Psoas muscle (tissue), 8 donors: ENCODE measurements at regions of chr4 and their contacts with region 1.

Region 1: DNA sequence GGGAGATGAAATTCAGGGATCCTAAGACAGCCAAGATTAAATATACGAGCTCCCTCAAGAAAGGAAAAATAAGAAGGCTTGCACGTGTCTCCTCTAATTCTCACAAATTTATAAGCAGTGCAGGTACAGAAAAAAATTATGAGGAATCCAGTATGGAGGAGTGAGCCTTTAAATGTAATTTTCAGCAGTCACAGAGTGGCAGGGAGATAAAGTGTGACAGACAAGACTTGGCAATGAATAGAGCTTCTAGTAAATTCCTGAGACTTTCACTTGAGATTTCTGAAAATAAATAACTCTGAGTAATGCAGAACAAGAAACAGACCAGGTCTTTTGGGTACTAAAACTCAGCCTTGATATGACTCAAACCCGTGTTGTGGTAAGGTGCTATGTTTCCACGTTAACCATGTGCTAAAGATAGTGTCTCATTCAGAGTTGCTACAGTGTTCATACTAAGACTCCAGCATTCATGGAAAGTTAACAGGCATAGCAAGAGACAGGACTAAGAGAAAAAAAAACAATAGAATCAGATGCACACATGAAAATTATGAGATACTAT is 119.8 kb downstream of the SPOCK3 start:
- DNase-seq: no peak
- ATAC-seq: no peak
- H3K4me3 ChIP-seq: no peak overlapping the region
- H3K27ac ChIP-seq: no peak overlapping the region
- H3K4me1 ChIP-seq: no peaks in the 10 kb centered on the region
- H3K27me3 ChIP-seq: no peaks in the 10 kb centered on the region
- CTCF ChIP-seq: no peak

Region 2: DNA sequence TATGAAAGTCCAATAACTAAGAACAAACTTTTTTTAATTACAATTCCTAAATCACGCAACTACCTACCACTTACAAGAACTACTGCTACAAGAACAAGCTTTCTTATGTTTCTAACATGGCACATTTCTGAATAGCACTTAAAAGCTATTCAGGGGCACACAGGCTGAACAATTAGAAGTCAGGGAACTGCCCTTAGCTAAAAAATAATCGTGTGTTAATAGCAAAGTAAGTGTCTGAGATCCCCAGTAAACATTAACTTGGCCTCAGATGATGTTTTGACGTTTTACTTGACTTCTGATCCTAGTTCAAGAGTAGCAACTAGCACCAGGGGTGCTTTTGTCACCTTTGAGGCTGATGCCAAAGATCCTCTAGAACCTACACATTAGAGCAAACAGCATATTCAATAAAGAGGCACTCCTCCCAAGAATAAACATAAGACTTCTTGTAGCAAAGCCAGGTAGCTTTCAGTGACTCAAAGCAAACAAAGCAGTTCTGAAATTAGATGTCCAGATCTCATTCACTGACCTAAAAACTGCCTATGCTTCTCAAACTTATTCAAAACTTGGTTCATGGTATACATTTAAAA is 103.6 kb after region 1 on chr4:
- intact Hi-C with region 1: loop called in 1 of 2 experiments (anchors 5 kb)
- DNase-seq: no peak
- ATAC-seq: no peak
- H3K4me3 ChIP-seq: no peak overlapping the region
- H3K27ac ChIP-seq: no peak overlapping the region
- H3K4me1 ChIP-seq: peaks cover 6% of the 10 kb centered on the region
- H3K27me3 ChIP-seq: no peaks in the 10 kb centered on the region
- CTCF ChIP-seq: no peak

Region 3: GRCh38 chr4:167587361-167587760 is 472.9 kb after region 1 on chr4:
- intact Hi-C with region 1: no loop called
- DNase-seq: no peak
- ATAC-seq: no peak
- H3K4me3 ChIP-seq: no peak overlapping the region
- H3K27ac ChIP-seq: no peak overlapping the region
- H3K4me1 ChIP-seq: no peaks in the 10 kb centered on the region
- H3K27me3 ChIP-seq: no peaks in the 10 kb centered on the region
- CTCF ChIP-seq: no peak